ENCODE measurements at regions of chr10 and their contacts with region 1.

Region 1: GRCh38 chr10:110497438-110498086 is at the start of gene DUSP5:
- DNase-seq: peak; percentile 91 to 95
- H3K4me3 ChIP-seq: peak within 1 kb of the TSS; percentile 75
- H3K4me3 Mint-ChIP-seq: peak within 1 kb of the TSS; percentile 91
- H3K27ac Mint-ChIP-seq: peak within 1 kb of the TSS; percentile 68
- H3K4me1 ChIP-seq: peaks cover 49% of the 10 kb centered on the region
- H3K4me1 Mint-ChIP-seq: peaks cover 50% of the 10 kb centered on the region
- H3K27me3 ChIP-seq: no peaks in the 10 kb centered on the region
- H3K27me3 Mint-ChIP-seq: no peaks in the 10 kb centered on the region
- CTCF ChIP-seq: no peak
- total RNA-seq, gene DUSP5: 15.0 and 18.4 TPM in 2 replicates

Region 2: DNA sequence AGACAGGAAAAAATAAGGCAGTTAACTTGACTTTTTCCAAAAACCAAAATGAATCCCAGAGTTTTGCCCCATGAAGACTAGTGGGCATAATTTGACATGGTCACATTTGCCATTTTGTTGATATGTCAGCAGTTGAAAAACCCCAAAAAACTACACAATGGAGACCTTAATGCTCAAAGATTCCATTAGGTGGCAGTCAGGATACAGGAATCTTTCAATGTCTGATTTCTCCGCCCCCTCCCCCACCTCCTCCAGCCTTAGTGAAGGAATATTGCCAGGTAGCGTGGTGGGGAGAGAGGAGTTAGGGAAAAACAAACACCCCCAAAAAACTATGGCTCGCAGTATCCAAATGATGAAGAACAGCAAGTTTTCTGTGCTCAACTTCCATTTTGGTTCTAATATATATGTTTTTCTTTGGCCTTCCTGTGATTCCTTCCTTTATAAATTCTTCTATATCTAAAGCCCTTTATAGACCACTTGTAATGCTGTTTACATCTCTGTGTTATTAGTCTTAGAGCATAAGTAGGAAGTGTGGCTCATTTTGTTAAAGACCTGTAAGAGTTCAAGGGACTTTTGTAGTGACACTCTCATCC is 186.1 kb before region 1 on chr10:
- CTCF ChIA-PET with region 1: interaction called, 6 read pairs
- POLR2A ChIA-PET with region 1: no interaction called
- intact Hi-C with region 1: loop called (anchors 1 kb)
- DNase-seq: peak; percentile 59 to 60
- H3K4me3 ChIP-seq: no peak overlapping the region
- H3K4me3 Mint-ChIP-seq: no peak overlapping the region
- H3K27ac Mint-ChIP-seq: no peak overlapping the region
- H3K4me1 ChIP-seq: peaks cover 7% of the 10 kb centered on the region
- H3K4me1 Mint-ChIP-seq: no peaks in the 10 kb centered on the region
- H3K27me3 ChIP-seq: no peaks in the 10 kb centered on the region
- H3K27me3 Mint-ChIP-seq: no peaks in the 10 kb centered on the region
- CTCF ChIP-seq: peak; percentile 65 to 83

Region 3: GRCh38 chr10:110395725-110396651 is 101.6 kb before region 1 on chr10:
- CTCF ChIA-PET with region 1: no interaction called
- POLR2A ChIA-PET with region 1: no interaction called
- intact Hi-C with region 1: loop called (anchors 5 kb)
- DNase-seq: peak; percentile 80 to 96
- H3K4me3 ChIP-seq: no peak overlapping the region
- H3K4me3 Mint-ChIP-seq: peak overlapping the region; percentile 20
- H3K27ac Mint-ChIP-seq: peak overlapping the region; percentile 84
- H3K4me1 ChIP-seq: peaks cover 78% of the 10 kb centered on the region
- H3K4me1 Mint-ChIP-seq: peaks cover 55% of the 10 kb centered on the region
- H3K27me3 ChIP-seq: no peaks in the 10 kb centered on the region
- H3K27me3 Mint-ChIP-seq: no peaks in the 10 kb centered on the region
- CTCF ChIP-seq: no peak

Region 4: DNA sequence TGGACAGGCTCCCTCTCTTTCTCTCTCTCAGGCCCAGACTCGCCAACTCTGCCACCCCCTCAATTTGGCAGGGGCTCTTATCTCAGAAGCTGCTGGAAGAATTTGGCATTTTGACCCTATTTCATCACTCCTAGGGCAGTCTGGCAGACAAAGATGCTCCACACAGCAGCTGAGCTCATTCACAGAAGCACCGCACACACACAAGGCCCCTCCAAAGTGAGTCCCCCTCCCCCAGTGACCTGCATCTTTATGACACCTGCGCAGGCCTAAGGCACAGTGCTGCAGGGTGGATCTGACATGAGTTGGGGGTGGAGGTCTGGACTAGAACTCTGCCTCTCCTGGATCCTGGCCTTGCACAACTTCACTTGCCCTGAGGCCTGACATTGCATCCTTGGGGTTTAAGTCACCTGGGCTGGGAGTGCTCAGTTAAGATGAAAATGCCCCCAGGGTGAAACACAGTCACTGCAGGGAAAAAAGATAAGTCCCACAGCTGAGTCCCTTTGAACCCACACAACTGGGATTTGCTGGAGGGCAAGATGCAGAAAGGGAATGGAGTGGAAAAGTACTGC is 41.0 kb before region 1 on chr10:
- CTCF ChIA-PET with region 1: interaction called, 10 read pairs
- POLR2A ChIA-PET with region 1: interaction called, 5 read pairs
- intact Hi-C with region 1: loop called (anchors 1 kb)
- DNase-seq: peak; percentile 96 to 98
- H3K4me3 ChIP-seq: no peak overlapping the region
- H3K4me3 Mint-ChIP-seq: peak overlapping the region; percentile 41
- H3K27ac Mint-ChIP-seq: peak overlapping the region; percentile 88
- H3K4me1 ChIP-seq: peaks cover 36% of the 10 kb centered on the region
- H3K4me1 Mint-ChIP-seq: peaks cover 35% of the 10 kb centered on the region
- H3K27me3 ChIP-seq: no peaks in the 10 kb centered on the region
- H3K27me3 Mint-ChIP-seq: no peaks in the 10 kb centered on the region
- CTCF ChIP-seq: no peak

Region 5: GRCh38 chr10:110530131-110530831 is 32.7 kb after region 1 on chr10:
- CTCF ChIA-PET with region 1: no interaction called
- POLR2A ChIA-PET with region 1: no interaction called
- intact Hi-C with region 1: loop called (anchors 2 kb)
- DNase-seq: peak; percentile 88 to 92
- H3K4me3 ChIP-seq: peak overlapping the region; percentile 54
- H3K4me3 Mint-ChIP-seq: peak overlapping the region; percentile 68
- H3K27ac Mint-ChIP-seq: peak overlapping the region; percentile 78
- H3K4me1 ChIP-seq: peaks cover 16% of the 10 kb centered on the region
- H3K4me1 Mint-ChIP-seq: peaks cover 5% of the 10 kb centered on the region
- H3K27me3 ChIP-seq: no peaks in the 10 kb centered on the region
- H3K27me3 Mint-ChIP-seq: no peaks in the 10 kb centered on the region
- CTCF ChIP-seq: no peak

Measured in Caco-2 (cell line).